Common myeloid progenitor, CD34-positive (primary cell): ENCODE measurements at regions of chr17 and their contacts with region 1.

Region 1: GRCh38 chr17:39153599-39154051 is 2.2 kb upstream of the PLXDC1 start:
- DNase-seq: peak; percentile 86 to 91 (median 91)
- H3K4me3 ChIP-seq: peak overlapping the region; percentile 91 to 100 (median 97)
- H3K27ac ChIP-seq: peak overlapping the region in 1 of 2 experiments; percentile 58
- H3K4me1 ChIP-seq: peaks cover 2 to 26% (median 24%) of the 10 kb centered on the region in 4 experiments
- H3K27me3 ChIP-seq: peaks cover 0 to 37% (median 28%) of the 10 kb centered on the region in 5 experiments

Region 2: GRCh38 chr17:38982858-38983746 is 170.5 kb before region 1 on chr17:
- CTCF ChIA-PET with region 1: interaction called, 54 read pairs
- POLR2A ChIA-PET with region 1: interaction called, 6 read pairs
- DNase-seq: peak; percentile 77 to 88 (median 83)
- H3K4me3 ChIP-seq: no peak overlapping the region
- H3K27ac ChIP-seq: no peak overlapping the region
- H3K4me1 ChIP-seq: no peaks in the 10 kb centered on the region
- H3K27me3 ChIP-seq: peaks cover 0 to 2% (median 0%) of the 10 kb centered on the region in 5 experiments

Region 3: DNA sequence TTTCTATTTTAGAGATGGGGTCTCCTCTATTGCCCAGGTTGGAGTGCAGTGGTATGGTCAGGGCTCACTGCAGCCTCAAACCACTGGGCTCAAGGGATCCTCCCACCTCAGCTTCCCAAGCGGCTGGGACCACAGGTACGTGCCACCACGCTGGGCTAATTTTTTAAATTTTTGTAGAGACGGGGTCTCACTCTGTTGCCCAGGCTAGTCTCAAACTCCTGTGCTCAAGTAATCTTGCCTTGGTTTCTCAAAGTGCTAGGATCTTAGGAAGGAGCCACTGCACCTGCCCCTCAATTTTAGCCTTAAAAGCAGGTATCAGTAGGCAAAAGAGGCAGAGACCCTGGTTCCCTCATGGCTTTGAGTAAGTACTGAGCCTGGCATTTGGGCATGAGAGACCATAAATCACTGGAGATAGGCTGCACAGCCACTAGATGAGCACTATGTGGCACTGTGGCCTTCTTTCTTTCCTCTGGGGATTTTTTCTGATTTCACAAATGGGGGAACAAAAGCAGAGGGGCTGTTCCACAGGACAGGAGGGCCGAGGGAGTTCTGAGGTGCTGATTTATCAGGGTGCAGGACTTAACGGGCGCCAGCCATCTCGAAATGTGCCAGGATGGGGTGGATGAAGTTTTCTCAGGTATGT is 84.4 kb before region 1 on chr17:
- CTCF ChIA-PET with region 1: interaction called, 16 read pairs
- POLR2A ChIA-PET with region 1: no interaction called
- DNase-seq: peak; percentile 43 to 81 (median 80)
- H3K4me3 ChIP-seq: no peak overlapping the region
- H3K27ac ChIP-seq: no peak overlapping the region
- H3K4me1 ChIP-seq: peaks cover 0 to 10% (median 3%) of the 10 kb centered on the region in 4 experiments
- H3K27me3 ChIP-seq: peaks cover 0 to 15% (median 0%) of the 10 kb centered on the region in 5 experiments

Region 4: GRCh38 chr17:39164675-39165143 is 11.1 kb after region 1 on chr17:
- CTCF ChIA-PET with region 1: interaction called, 96 read pairs
- POLR2A ChIA-PET with region 1: interaction called, 7 read pairs
- DNase-seq: peak; percentile 87 to 93 (median 90)
- H3K4me3 ChIP-seq: peak overlapping the region; percentile 28 to 98 (median 77)
- H3K27ac ChIP-seq: no peak overlapping the region
- H3K4me1 ChIP-seq: peaks cover 18 to 55% (median 48%) of the 10 kb centered on the region in 4 experiments
- H3K27me3 ChIP-seq: no peaks in the 10 kb centered on the region

Region 5: GRCh38 chr17:39174907-39175694 is 21.5 kb after region 1 on chr17:
- CTCF ChIA-PET with region 1: interaction called, 60 read pairs
- POLR2A ChIA-PET with region 1: interaction called, 9 read pairs
- DNase-seq: peak; percentile 83 to 90 (median 87)
- H3K4me3 ChIP-seq: peak overlapping the region in 2 of 7 experiments; percentile 4 to 48
- H3K27ac ChIP-seq: no peak overlapping the region
- H3K4me1 ChIP-seq: peaks cover 4 to 42% (median 30%) of the 10 kb centered on the region in 4 experiments
- H3K27me3 ChIP-seq: no peaks in the 10 kb centered on the region

Region 6: DNA sequence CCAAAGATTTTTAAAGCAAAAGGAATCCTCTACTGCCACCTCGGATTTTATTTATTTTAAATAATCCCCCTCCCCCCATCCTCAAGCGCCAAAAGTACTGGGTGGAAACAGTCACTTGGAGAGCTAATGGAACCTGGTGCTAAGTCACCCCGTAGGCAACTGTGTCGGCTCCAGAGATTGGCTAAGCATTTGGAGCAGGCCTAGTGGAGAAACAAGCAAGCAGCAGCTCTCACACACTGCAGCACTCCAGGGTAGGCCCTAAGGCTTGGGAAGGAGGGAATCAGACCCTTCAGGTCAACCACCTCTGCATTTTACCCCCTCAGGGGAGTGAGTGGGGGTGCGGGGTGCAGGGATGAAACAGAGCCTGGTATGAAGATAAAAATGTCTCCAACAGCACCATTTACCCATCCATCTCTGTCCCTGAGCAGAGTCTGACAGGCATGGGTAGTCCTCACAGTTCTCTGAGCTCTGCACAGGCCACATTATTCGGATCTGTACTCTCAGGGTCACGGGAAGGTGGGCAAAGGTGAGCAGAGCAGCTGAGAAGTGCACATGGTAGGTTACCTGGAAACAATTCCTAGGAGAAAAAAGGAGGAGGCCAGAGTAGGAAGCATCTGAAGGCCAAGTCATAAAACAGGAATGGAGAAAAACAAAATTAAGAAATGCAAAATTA is 99.3 kb after region 1 on chr17:
- CTCF ChIA-PET with region 1: no interaction called
- POLR2A ChIA-PET with region 1: no interaction called
- DNase-seq: no peak
- H3K4me3 ChIP-seq: no peak overlapping the region
- H3K27ac ChIP-seq: no peak overlapping the region
- H3K4me1 ChIP-seq: no peaks in the 10 kb centered on the region
- H3K27me3 ChIP-seq: no peaks in the 10 kb centered on the region